ENCODE measurements at regions of chr7 and their contacts with region 1.

Region 1: DNA sequence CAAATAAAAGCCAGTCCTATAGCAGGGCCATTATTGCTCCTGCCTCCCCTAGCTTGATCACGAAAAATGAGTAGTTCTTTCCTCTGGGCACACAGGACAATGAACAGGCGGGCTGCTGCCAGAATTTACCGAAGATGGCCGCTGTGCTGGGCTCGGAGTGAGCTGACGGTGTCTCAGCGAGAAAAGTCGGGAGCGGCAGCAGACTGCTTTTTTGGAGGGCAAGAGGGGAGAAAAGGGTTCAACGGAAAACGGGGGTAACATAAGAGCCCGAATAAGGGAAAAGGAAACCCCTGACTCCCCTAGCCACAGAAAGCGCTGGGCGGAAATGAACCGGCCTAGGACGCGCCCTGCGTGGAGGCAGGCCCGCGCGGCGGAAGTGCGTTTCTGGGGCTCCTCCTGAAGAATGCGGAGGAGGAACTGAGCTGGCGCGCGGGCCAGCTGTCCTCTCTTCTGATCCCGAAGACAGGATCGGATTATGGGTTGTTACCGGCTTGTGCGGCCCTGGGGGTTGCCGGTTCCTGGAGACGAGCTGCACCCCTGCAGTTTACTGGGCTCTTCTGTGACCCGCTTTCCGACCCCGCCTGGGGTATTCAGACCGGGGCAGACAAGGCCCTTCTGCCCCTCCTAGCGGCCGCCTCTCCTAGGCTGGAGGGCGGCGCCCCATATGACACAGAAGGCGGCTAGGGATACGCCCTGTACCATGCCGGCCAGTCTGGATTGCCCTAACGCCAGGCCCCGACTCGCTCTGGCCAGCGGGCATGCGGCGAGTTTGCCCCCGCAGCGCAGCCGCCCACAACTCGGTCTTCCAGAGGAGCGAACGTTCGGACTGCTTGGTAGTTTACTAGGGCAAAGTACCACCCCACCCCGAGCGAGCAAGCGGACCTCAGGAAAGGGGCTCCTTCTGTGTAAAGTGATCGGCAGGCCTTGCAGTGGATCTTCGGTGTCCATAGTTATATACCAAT is 30.1 kb upstream of the KMT2E start:
- DNase-seq: peak; percentile 94
- H3K4me3 ChIP-seq: peak overlapping the region; percentile 57 to 64 (median 62)
- H3K27ac ChIP-seq: peak overlapping the region; percentile 93 to 97 (median 96)
- H3K4me1 ChIP-seq: peaks cover 0 to 74% (median 56%) of the 10 kb centered on the region in 4 donors
- H3K27me3 ChIP-seq: no peaks in the 10 kb centered on the region
- CTCF ChIP-seq: peak in 3 of 4 experiments; percentile 49 to 69 (median 59)
- EP300 ChIP-seq: no peak
- POLR2A ChIP-seq: peak; percentile 53 to 86

Region 2: GRCh38 chr7:105012503-105013220 is 28.8 kb after region 1 on chr7:
- intact Hi-C with region 1: loop called (anchors 1 kb)
- DNase-seq: peak; percentile 100
- H3K4me3 ChIP-seq: peak overlapping the region; percentile 76 to 97 (median 86)
- H3K27ac ChIP-seq: peak overlapping the region; percentile 98 to 99 (median 98)
- H3K4me1 ChIP-seq: peaks cover 0 to 52% (median 41%) of the 10 kb centered on the region in 4 donors
- H3K27me3 ChIP-seq: no peaks in the 10 kb centered on the region
- CTCF ChIP-seq: no peak
- EP300 ChIP-seq: peak in 2 of 4 donors; percentile 81 to 91
- POLR2A ChIP-seq: peak; percentile 53 to 72

Region 3: GRCh38 chr7:105112440-105113418 is 128.9 kb after region 1 on chr7:
- intact Hi-C with region 1: loop called (anchors 5 kb)
- DNase-seq: no peak
- H3K4me3 ChIP-seq: no peak overlapping the region
- H3K27ac ChIP-seq: peak overlapping the region in 3 of 4 donors; percentile 10 to 53 (median 35)
- H3K4me1 ChIP-seq: peaks cover 0 to 14% (median 11%) of the 10 kb centered on the region in 4 donors
- H3K27me3 ChIP-seq: no peaks in the 10 kb centered on the region
- CTCF ChIP-seq: no peak
- EP300 ChIP-seq: no peak
- POLR2A ChIP-seq: no peak

Region 4: DNA sequence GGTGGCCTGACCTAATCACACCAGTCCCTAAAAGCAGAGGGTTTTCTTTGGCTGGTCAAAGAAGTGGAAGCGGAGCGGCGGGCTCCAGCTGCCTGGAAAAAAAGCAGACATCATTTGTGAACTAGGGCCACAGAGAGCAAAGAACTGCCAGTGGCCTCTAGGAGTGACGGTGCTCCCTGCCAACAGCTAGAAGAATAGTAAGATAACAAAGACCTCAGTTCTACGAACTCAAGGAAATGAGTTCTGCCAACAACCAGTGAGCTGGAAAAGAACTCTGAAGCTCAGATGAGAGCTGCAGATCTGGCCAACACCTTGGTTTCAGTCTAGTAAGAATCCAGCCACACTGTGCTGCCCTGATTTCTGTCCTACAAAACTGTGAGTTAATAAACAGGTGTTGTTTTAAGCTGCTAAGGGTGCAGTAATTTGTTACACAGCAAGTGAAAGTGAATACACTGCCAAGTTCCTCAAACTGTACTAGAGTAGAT is 226.9 kb after region 1 on chr7:
- intact Hi-C with region 1: no loop called
- DNase-seq: no peak
- H3K4me3 ChIP-seq: no peak overlapping the region
- H3K27ac ChIP-seq: peak overlapping the region in 1 of 4 donors; percentile 37
- H3K4me1 ChIP-seq: peaks cover 0 to 22% (median 13%) of the 10 kb centered on the region in 4 donors
- H3K27me3 ChIP-seq: no peaks in the 10 kb centered on the region
- CTCF ChIP-seq: no peak
- EP300 ChIP-seq: no peak
- POLR2A ChIP-seq: no peak

Region 5: DNA sequence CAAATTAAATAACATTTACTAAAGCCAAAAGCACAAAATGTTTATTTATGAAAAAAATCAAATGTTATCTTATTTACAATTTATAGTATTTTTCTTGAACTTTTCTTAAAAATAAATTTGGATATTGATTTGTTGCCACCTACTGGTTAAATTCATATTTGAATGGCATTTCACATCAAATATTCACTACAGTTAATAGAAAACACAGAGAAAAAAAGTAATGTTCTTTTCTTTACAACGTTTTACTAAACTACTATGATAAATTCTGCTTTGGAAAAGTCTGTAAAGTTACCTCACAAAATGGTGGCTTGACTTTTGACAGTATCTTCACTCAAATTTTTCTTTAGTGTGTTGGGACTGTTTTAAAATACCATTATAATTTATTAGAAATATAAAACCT is 352.1 kb after region 1 on chr7:
- intact Hi-C with region 1: loop called (anchors 10 kb)
- DNase-seq: no peak
- H3K4me3 ChIP-seq: no peak overlapping the region
- H3K27ac ChIP-seq: no peak overlapping the region
- H3K4me1 ChIP-seq: peaks cover 0 to 10% (median 7%) of the 10 kb centered on the region in 4 donors
- H3K27me3 ChIP-seq: no peaks in the 10 kb centered on the region
- CTCF ChIP-seq: no peak
- EP300 ChIP-seq: no peak
- POLR2A ChIP-seq: no peak

Region 6: GRCh38 chr7:105387621-105388372 is 403.9 kb after region 1 on chr7:
- intact Hi-C with region 1: loop called (anchors 5 kb)
- DNase-seq: peak; percentile 83
- H3K4me3 ChIP-seq: peak overlapping the region; percentile 88 to 99 (median 98)
- H3K27ac ChIP-seq: peak overlapping the region; percentile 85 to 91 (median 88)
- H3K4me1 ChIP-seq: peaks cover 0 to 12% (median 12%) of the 10 kb centered on the region in 4 donors
- H3K27me3 ChIP-seq: no peaks in the 10 kb centered on the region
- CTCF ChIP-seq: no peak
- EP300 ChIP-seq: no peak
- POLR2A ChIP-seq: no peak